Activated CD4-positive, alpha-beta T cell treated with anti-CD3 and anti-CD28 coated beads for 36 hours (primary cell): ENCODE measurements at regions of chr12 and their contacts with region 1.

Region 1: DNA sequence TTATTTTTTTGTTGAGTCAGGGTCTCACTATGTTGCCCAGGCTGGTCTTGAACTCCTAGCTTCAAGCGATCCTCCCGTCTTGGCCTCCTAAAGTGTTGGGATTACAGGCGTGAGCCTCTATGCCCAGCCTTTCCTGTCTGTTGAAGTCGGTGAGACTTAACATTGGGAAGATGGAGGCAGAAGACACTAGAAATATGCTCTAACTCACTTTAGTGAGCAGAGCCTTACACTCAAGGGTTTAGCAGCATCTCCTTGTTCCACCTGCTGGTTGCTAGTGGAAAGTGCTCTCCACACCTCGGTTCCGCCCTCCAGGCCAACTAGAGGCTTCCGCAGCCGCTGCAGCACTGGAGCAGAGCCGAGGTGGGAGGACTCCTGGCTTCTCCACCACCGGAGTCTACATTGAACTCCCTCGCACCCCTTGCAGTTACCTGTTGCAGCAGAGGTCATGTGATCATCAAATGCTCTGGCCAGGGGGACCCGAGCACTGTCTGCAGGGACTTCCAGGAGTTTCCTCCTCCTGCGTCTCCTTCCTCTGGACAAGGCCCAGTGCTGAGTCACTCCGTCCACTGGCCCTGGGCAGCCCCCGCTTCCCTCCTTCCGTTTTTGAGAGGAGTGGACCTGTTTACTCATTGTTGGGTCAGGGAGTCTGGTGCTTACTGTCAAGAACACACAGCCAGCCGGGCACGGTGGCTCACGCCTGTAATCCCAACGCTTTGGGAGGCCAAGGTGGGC is 9.4 kb upstream of the HVCN1 start:
- DNase-seq: peak; percentile 89
- ATAC-seq: peak; percentile 100
- H3K4me3 Mint-ChIP-seq: no peak overlapping the region
- H3K27ac Mint-ChIP-seq: peak overlapping the region; percentile 76
- H3K4me1 Mint-ChIP-seq: peaks cover 13% of the 10 kb centered on the region
- H3K27me3 Mint-ChIP-seq: no peaks in the 10 kb centered on the region

Region 2: DNA sequence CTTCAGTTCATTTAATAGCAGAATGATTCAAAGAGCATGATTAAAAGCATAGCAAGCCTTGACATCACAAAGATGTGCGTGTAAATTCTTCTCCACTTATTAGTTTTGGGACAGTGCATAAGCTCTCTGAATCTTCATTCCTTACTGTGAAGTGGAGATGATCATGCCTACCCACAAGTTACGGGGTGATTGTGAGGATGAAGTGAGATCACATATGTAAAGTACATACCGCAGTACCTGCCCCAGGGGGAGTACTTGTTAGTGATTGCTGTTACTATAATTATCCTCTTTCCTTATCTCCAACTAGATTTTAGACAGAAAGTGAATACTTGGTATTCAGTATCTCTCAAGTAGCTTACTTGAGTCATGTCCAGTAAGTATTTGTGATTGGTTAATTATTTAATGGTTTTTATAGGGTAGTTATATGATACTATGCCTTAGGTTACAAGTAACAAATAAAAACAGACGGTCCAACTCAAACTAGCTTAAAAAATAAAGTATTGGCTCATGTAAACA is 190.2 kb before region 1 on chr12:
- CTCF ChIA-PET with region 1: interaction called, 3 read pairs
- POLR2A ChIA-PET with region 1: no interaction called
- intact Hi-C with region 1: loop called in 1 of 2 experiments (anchors 1 kb)
- DNase-seq: no peak
- ATAC-seq: no peak
- H3K4me3 Mint-ChIP-seq: no peak overlapping the region
- H3K27ac Mint-ChIP-seq: no peak overlapping the region
- H3K4me1 Mint-ChIP-seq: no peaks in the 10 kb centered on the region
- H3K27me3 Mint-ChIP-seq: no peaks in the 10 kb centered on the region

Region 3: GRCh38 chr12:110528277-110528839 is 170.0 kb before region 1 on chr12:
- CTCF ChIA-PET with region 1: no interaction called
- POLR2A ChIA-PET with region 1: no interaction called
- intact Hi-C with region 1: no loop called
- DNase-seq: no peak
- ATAC-seq: no peak
- H3K4me3 Mint-ChIP-seq: no peak overlapping the region
- H3K27ac Mint-ChIP-seq: no peak overlapping the region
- H3K4me1 Mint-ChIP-seq: peaks cover 19% of the 10 kb centered on the region
- H3K27me3 Mint-ChIP-seq: no peaks in the 10 kb centered on the region

Region 4: DNA sequence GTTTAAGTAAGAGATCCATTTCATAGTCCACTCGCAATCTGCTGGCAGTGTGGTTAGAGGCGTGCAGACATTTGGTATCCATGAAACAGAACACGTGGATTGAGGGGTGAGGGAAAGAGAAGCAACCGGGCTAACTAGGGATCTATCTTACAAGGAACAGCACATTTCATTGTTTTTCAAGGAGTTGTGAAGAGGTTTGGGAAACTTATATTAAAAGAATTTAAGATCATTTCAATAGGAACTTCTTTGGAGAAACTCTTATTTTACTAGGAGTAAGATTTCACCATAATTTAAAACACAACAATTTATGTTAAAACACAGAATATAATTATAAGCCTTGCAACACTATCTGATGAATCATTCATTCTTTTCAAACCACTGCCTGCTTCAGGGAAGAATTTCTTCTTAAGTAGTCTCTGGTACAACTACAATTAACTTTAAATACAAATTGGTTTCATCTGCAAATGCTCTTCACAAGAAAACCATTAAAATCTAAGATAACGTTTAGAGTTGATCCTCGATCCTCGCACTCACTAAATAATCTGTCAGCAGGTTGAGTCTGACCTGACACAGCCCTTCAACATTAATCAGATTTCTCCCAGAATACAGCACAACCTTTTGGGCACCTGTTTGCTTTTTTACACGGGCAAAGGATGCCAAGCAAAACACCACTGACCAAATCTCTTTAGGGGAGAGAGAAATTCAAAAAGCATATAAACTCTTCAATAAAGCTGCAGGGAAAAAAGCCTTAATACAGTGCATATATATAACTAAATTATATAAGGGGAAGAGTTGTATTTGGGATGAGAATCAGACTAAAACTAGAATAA is 142.5 kb before region 1 on chr12:
- CTCF ChIA-PET with region 1: no interaction called
- POLR2A ChIA-PET with region 1: no interaction called
- intact Hi-C with region 1: no loop called
- DNase-seq: no peak
- ATAC-seq: no peak
- H3K4me3 Mint-ChIP-seq: no peak overlapping the region
- H3K27ac Mint-ChIP-seq: peak overlapping the region; percentile 29
- H3K4me1 Mint-ChIP-seq: peaks cover 56% of the 10 kb centered on the region
- H3K27me3 Mint-ChIP-seq: no peaks in the 10 kb centered on the region

Region 5: GRCh38 chr12:110619534-110619953 is 78.8 kb before region 1 on chr12:
- CTCF ChIA-PET with region 1: interaction called, 4 read pairs
- POLR2A ChIA-PET with region 1: no interaction called
- intact Hi-C with region 1: loop called (anchors 1 kb)
- DNase-seq: peak; percentile 68
- ATAC-seq: peak; percentile 92
- H3K4me3 Mint-ChIP-seq: peak overlapping the region; percentile 19
- H3K27ac Mint-ChIP-seq: peak overlapping the region; percentile 55
- H3K4me1 Mint-ChIP-seq: peaks cover 20% of the 10 kb centered on the region
- H3K27me3 Mint-ChIP-seq: no peaks in the 10 kb centered on the region

Region 6: DNA sequence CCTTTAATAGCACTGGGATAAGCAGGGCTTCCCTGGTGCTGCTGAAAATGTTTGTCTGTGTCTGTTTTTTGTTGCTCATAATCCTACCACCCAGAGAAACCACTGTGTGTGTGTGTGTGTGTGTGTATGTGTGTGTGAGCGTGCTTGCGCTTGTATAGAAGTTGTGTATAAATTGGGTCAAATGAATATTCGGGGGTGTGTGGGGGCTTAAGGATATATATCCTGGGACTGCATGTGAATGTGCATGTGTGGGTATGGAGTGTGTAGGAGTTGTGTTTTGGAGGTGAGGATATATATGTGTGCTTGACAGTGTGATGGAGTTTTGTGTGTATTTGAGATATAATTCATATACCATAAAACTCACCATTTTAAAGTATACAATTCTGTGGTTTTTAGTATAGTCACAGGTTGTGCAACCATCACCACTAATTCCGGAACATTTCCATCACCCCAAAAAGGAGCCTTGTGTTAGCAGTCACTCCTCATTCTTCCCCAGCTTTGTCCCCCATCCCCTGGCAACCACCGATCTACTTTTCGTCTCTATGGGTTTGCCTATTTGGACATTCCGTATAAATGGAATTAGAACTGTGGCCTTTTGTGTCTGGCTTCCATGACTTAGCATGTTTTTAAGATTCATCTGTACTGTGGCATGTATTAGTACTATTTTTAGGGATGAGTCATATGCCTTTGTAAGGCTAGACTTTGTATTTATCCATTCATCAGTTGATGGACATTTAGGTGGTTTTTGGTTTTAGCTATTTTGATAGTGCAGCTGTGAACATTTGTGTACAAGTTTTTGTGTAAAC is 58.8 kb before region 1 on chr12:
- CTCF ChIA-PET with region 1: no interaction called
- POLR2A ChIA-PET with region 1: no interaction called
- intact Hi-C with region 1: loop called in 1 of 2 experiments (anchors 10 kb)
- DNase-seq: no peak
- ATAC-seq: no peak
- H3K4me3 Mint-ChIP-seq: no peak overlapping the region
- H3K27ac Mint-ChIP-seq: no peak overlapping the region
- H3K4me1 Mint-ChIP-seq: peaks cover 34% of the 10 kb centered on the region
- H3K27me3 Mint-ChIP-seq: no peaks in the 10 kb centered on the region

Region 7: GRCh38 chr12:112261559-112261958 is 1563.2 kb after region 1 on chr12:
- CTCF ChIA-PET with region 1: no interaction called
- POLR2A ChIA-PET with region 1: no interaction called
- intact Hi-C with region 1: no loop called
- DNase-seq: no peak
- ATAC-seq: no peak
- H3K4me3 Mint-ChIP-seq: no peak overlapping the region
- H3K27ac Mint-ChIP-seq: no peak overlapping the region
- H3K4me1 Mint-ChIP-seq: no peaks in the 10 kb centered on the region
- H3K27me3 Mint-ChIP-seq: no peaks in the 10 kb centered on the region